ENCODE measurements at regions of chr12 and their contacts with region 1.

Region 1: DNA sequence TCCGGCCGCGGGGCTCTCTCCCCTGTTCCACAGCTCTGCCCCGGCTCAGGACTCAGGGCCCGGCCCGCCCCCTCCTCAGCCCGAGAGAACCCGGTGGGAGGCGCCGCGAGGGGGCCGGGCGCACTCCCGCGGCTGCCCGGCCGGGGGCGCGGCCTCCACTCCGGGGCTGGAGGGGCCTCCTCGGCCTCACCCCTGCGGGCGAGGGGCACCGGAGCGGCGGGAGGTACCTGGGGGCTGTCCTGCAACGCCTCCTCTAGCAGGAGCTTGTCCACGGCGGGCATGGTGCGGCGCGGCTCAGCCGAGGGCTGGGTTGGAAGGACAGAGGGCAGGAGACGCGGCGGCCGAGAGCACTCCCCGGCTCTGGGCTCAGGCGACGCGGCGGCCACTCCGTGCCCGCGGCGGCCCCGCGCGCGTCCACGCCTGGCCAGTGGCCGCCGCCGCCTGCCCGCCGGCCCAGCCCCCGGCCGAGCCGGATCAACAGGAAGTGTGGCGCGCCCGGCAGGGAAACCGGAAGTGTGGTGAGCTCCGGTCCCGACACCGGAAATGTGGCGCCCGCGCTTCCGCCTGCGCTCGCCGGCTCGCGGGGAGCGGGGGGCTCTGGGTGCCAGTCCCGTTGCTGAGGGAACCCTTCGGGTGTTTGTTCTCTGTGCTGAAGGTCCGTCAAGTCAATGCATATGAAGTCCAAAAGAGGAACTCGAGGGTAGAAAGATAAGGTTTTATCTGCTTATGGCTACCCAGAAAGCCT is at the start of gene APPL2:
- DNase-seq: peak; percentile 78
- H3K4me3 ChIP-seq: peak within 1 kb of the TSS; percentile 60 to 92 (median 89)
- H3K27ac ChIP-seq: peak within 1 kb of the TSS; percentile 82
- H3K4me1 ChIP-seq: peaks cover 21% of the 10 kb centered on the region
- H3K27me3 ChIP-seq: no peaks in the 10 kb centered on the region
- CTCF ChIP-seq: peak in 1 of 2 donors; percentile 16
- total RNA-seq, gene APPL2: 32.1 to 36.0 TPM

Region 2: DNA sequence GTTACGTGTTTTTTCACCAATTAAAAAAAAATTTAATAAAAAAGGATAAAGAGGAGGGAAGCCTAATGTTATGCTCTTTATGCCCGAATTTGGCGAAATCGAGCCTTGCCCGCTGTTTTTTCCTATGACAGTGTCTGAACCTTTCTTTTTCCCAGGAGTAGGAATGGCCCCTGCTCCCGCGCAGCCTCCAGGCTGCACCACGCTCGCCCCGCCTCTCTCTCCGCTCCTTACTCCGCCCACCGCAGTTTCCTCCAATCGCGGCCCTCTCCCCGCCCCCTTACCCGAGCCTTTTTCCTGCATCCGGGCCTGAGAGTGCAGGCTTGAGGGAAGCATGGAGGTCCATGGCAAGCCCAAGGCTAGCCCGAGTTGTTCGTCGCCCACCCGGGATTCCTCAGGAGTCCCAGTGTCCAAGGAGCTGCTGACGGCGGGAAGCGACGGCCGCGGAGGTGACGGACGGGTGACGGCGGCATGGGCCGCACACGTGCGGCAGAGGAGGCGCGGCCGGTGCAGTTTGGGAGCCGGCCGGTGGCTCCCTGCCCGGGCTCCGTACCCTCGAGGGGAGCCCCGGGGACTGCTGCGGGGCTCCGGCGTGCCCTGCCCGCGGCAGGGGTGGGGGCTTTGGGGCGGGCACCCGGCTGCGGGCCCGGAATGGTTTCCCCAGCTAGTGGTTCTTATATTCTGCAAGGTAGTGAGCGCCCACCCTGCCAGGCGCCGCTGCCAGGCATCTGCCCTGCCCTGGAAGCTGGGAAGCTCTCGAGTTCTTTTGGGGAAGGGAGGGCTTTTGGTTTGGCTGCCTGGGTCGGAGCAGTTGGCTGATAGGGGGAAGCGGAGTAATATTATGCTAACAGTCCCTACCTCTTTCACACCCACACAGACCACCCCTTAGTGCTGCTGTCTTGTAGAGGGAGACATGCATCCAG is 249.6 kb before region 1 on chr12 and contains the start of gene NOPCHAP1:
- CTCF ChIA-PET with region 1: no interaction called
- dilution Hi-C with region 1: no loop called
- in situ Hi-C with region 1: no loop called
- intact Hi-C with region 1: no loop called
- DNase-seq: peak; percentile 85
- H3K4me3 ChIP-seq: peak within 1 kb of the TSS; percentile 51 to 94 (median 88)
- H3K27ac ChIP-seq: peak within 1 kb of the TSS; percentile 54
- H3K4me1 ChIP-seq: peaks cover 14% of the 10 kb centered on the region
- H3K27me3 ChIP-seq: no peaks in the 10 kb centered on the region
- CTCF ChIP-seq: no peak
- total RNA-seq, gene NOPCHAP1: 5.2 to 29.6 TPM

Region 3: GRCh38 chr12:105253882-105254513 is 18.1 kb after region 1 on chr12:
- CTCF ChIA-PET with region 1: interaction called, 3 read pairs
- dilution Hi-C with region 1: no loop called
- in situ Hi-C with region 1: no loop called
- intact Hi-C with region 1: loop called (anchors 2 kb)
- DNase-seq: peak; percentile 66
- H3K4me3 ChIP-seq: peak overlapping the region in 1 of 3 experiments; percentile 11
- H3K27ac ChIP-seq: peak overlapping the region; percentile 79
- H3K4me1 ChIP-seq: peaks cover 40% of the 10 kb centered on the region
- H3K27me3 ChIP-seq: no peaks in the 10 kb centered on the region
- CTCF ChIP-seq: no peak

Region 4: GRCh38 chr12:105279460-105280056 is 43.7 kb after region 1 on chr12:
- CTCF ChIA-PET with region 1: no interaction called
- dilution Hi-C with region 1: no loop called
- in situ Hi-C with region 1: no loop called
- intact Hi-C with region 1: loop called (anchors 1 kb)
- DNase-seq: no peak
- H3K4me3 ChIP-seq: no peak overlapping the region
- H3K27ac ChIP-seq: no peak overlapping the region
- H3K4me1 ChIP-seq: peaks cover 7% of the 10 kb centered on the region
- H3K27me3 ChIP-seq: no peaks in the 10 kb centered on the region
- CTCF ChIP-seq: peak; percentile 47 to 64

Region 5: GRCh38 chr12:105330283-105330930 is 94.5 kb after region 1 on chr12 and contains the start of gene C12orf75:
- CTCF ChIA-PET with region 1: no interaction called
- dilution Hi-C with region 1: no loop called
- in situ Hi-C with region 1: no loop called
- intact Hi-C with region 1: loop called (anchors 1 kb)
- DNase-seq: peak; percentile 60
- H3K4me3 ChIP-seq: peak within 1 kb of the TSS; percentile 53 to 79 (median 72)
- H3K27ac ChIP-seq: peak within 1 kb of the TSS; percentile 66
- H3K4me1 ChIP-seq: peaks cover 51% of the 10 kb centered on the region
- H3K27me3 ChIP-seq: no peaks in the 10 kb centered on the region
- CTCF ChIP-seq: no peak
- total RNA-seq, gene C12orf75: 88.7 to 177 TPM

Region 6: DNA sequence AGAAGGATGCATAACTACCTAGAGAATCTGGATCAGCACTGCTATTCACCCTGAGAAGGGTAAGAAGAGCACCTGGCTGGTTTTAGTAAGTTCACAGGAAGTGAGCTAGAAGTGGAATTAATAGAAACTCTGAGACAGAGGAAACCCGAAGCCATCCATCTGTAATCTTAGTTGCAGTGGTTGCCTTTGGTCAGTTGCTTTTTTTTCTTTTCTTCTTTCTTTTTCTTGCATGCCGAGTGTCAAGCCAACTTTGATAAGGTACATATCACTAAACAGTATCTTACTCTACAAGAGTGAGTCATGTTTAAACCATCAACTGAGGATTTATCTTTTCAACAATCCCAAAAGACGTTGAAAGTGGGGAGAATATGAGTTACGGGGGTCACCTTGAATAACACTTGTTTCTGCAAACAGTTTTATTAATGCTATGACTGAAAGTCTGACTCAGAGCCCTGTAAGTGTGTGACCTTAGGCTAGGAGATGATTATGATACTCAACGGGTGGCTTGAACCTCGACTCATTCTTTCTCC is 121.3 kb after region 1 on chr12:
- CTCF ChIA-PET with region 1: no interaction called
- dilution Hi-C with region 1: no loop called
- in situ Hi-C with region 1: no loop called
- intact Hi-C with region 1: no loop called
- DNase-seq: no peak
- H3K4me3 ChIP-seq: no peak overlapping the region
- H3K27ac ChIP-seq: no peak overlapping the region
- H3K4me1 ChIP-seq: peaks cover 9% of the 10 kb centered on the region
- H3K27me3 ChIP-seq: no peaks in the 10 kb centered on the region
- CTCF ChIP-seq: no peak

Region 7: GRCh38 chr12:105369014-105369413 is 133.1 kb after region 1 on chr12:
- CTCF ChIA-PET with region 1: no interaction called
- dilution Hi-C with region 1: no loop called
- in situ Hi-C with region 1: no loop called
- intact Hi-C with region 1: loop called (anchors 1 kb)
- DNase-seq: peak; percentile 45
- H3K4me3 ChIP-seq: no peak overlapping the region
- H3K27ac ChIP-seq: no peak overlapping the region
- H3K4me1 ChIP-seq: no peaks in the 10 kb centered on the region
- H3K27me3 ChIP-seq: no peaks in the 10 kb centered on the region
- CTCF ChIP-seq: peak in 1 of 2 donors; percentile 41

Region 8: DNA sequence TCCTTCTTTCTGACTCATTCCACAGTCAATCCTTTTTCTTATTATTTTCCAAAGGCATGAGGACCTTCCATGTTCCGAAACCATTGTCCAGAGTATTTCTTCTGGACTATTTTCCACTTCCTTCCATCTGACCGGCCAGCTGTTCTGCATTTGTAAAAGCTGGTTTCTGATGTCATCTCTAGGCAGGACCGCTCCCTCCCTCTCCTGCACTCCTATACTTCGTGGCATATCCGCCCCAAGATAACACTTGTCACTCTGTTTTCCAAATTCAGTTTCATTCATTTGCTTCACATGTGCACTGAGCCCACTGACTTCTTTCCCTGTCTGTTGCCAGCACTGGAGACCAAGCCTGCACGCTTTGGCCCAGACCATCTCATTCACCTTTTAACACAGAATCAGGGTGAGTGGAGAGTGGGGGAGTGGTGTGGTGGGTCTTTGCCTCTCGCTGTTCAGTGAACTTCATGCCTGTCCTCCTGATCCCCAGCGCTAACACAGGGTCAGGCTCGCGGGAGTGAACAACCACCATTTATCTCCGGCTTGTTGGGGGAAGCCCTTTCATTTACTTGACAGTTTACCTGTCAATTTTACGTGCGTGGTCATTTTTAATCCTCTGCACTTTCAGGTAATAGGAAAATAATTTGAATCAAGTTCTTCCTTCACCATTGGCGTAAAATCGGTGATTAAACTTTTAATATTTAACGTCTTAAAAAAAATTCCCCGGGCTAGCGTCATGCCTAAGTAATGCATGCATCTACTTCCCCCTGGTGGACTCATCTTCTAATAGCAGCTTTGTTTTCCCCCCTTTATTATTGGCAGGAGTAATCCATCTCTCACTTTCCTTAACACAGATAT is 147.1 kb after region 1 on chr12:
- CTCF ChIA-PET with region 1: no interaction called
- dilution Hi-C with region 1: no loop called
- in situ Hi-C with region 1: no loop called
- intact Hi-C with region 1: loop called (anchors 1 kb)
- DNase-seq: peak; percentile 47
- H3K4me3 ChIP-seq: no peak overlapping the region
- H3K27ac ChIP-seq: no peak overlapping the region
- H3K4me1 ChIP-seq: peaks cover 20% of the 10 kb centered on the region
- H3K27me3 ChIP-seq: no peaks in the 10 kb centered on the region
- CTCF ChIP-seq: peak; percentile 75 to 82